CD8-positive, alpha-beta memory T cell (primary cell): ENCODE measurements at regions of chr15 and their contacts with region 1.

Region 1: DNA sequence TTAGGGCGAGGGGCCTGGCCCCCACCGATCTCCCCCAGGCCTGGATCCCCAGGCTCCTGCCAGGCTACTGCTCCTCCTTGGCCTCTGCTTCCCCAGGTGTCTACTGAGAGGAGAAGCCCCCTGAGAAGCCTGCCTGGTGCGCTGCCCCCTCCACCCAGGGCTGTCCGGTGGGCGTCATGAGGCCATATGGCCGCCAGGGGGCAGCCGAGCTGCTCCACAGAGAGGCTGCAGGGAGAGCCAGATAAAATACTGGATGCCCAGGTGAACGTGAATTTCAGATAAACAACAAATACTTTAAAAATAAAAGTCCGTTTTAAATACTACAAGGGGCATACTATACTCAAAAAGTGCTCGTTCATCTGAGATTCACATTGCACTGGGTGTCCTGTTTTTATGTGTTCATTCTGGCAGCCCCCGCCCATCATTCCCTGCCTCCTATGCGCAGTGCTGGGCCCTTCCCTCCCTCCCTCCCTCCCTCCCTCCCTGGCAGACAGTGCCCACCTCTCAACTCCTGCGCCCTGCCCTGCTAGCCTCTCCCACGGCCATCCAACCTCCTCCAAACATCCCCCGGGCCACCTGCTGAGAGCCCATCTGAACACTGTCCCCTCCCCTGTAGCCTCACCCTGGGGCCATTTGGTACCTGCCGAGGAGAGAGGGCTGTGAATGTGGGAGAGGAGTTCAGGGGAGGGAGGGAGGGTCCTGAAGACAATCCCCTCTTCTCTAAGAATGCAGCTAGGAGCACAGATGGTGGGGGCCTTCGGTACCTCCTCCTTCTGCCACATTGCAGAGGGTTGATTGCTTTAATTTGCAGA is 29.6 kb downstream of the PSTPIP1 start:
- DNase-seq: peak; percentile 54 to 76 (median 62)
- H3K4me3 ChIP-seq: no peak overlapping the region
- H3K4me3 Mint-ChIP-seq: peak overlapping the region in 3 of 7 donors; percentile 20 to 55 (median 41)
- H3K27ac ChIP-seq: peak overlapping the region; percentile 54
- H3K27ac Mint-ChIP-seq: peak overlapping the region; percentile 87 to 100 (median 98)
- H3K4me1 ChIP-seq: peaks cover 48% of the 10 kb centered on the region
- H3K4me1 Mint-ChIP-seq: peaks cover 49 to 70% (median 54%) of the 10 kb centered on the region in 3 donors
- H3K27me3 ChIP-seq: no peaks in the 10 kb centered on the region
- H3K27me3 Mint-ChIP-seq: peaks cover 0 to 2% of the 10 kb centered on the region in 2 donors

Region 2: GRCh38 chr15:76994971-76995945 is 29.2 kb before region 1 on chr15 and contains the start of gene PSTPIP1:
- CTCF ChIA-PET with region 1: interaction called, 63 read pairs
- POLR2A ChIA-PET with region 1: interaction called, 38 read pairs
- DNase-seq: peak; percentile 48 to 83 (median 70)
- H3K4me3 ChIP-seq: peak within 1 kb of the TSS; percentile 92
- H3K4me3 Mint-ChIP-seq: peak within 1 kb of the TSS; percentile 81 to 99 (median 97)
- H3K27ac ChIP-seq: peak within 1 kb of the TSS; percentile 57
- H3K27ac Mint-ChIP-seq: peak within 1 kb of the TSS; percentile 86 to 100 (median 97)
- H3K4me1 ChIP-seq: peaks cover 62% of the 10 kb centered on the region
- H3K4me1 Mint-ChIP-seq: peaks cover 58 to 74% (median 64%) of the 10 kb centered on the region in 3 donors
- H3K27me3 ChIP-seq: no peaks in the 10 kb centered on the region
- H3K27me3 Mint-ChIP-seq: no peaks in the 10 kb centered on the region
- total RNA-seq, gene PSTPIP1: 123 to 127 TPM